Caco-2 (cell line): ENCODE measurements at regions of chr2 and their contacts with region 1.

Region 1: DNA sequence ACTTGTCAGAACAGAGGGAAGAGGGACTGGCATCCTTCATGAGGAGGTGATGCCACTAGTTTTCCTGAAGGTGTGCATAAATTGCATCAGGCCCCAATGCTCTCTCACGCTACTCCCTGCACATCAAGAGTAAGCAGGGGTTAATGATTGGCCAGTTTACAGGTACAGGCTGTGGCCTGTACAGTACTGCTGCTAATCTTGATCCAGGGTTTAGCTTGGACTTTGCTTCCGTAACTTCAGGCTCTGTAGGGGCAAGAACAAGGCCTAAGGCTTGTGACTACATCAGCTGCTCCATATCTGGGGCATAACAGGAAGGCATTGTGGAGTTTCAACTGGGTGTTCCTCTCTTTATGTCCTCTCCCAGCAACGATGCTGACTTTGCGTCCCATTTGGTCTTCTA is 96.8 kb upstream of the FZD7 start:
- DNase-seq: peak; percentile 74 to 83
- H3K4me3 ChIP-seq: no peak overlapping the region
- H3K4me3 Mint-ChIP-seq: no peak overlapping the region
- H3K27ac Mint-ChIP-seq: peak overlapping the region; percentile 85
- H3K4me1 ChIP-seq: peaks cover 30% of the 10 kb centered on the region
- H3K4me1 Mint-ChIP-seq: peaks cover 20% of the 10 kb centered on the region
- H3K27me3 ChIP-seq: no peaks in the 10 kb centered on the region
- H3K27me3 Mint-ChIP-seq: no peaks in the 10 kb centered on the region
- CTCF ChIP-seq: no peak

Region 2: DNA sequence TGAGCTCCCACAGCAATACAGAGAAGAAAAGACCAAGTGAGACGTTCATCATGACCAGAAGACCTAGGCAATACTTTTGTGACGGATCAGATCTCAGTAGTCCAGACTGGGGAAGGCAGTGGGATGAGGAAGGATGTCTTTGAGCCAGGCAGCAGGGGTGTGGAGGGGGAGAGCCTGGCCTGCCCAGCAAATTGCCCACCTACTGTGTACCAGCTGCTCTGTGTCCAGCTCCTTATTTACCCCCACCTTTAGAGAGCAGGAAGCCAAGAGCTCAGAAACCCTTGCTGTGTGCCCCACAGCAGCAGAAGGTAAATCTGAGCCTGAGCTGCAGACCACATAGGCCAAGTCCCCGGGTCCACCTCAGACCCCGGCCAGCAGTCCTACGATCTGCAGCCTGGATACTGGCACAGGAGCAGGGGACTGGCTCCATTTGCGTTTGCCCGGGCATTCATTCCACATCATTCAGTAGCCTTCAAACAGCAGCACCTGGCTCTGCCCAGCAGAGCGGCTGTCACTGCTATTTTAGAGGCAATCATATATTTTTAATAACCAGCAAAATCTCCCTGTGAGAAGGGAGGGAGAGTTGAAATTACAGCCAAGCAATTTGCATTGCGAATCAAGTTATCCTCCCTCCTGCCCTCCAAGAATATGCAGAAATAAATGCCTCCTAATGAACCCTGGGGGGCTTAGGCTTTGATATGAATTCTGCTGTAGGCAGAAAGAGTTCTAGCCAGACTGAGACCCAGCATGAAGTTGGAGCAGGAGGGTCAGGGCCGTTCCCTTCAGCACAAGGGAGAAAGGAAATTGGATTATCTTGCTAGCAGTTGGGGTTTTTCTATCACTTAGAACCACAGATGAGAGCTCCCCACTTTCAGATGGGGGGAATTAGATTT is 13.1 kb before region 1 on chr2:
- CTCF ChIA-PET with region 1: no interaction called
- POLR2A ChIA-PET with region 1: no interaction called
- intact Hi-C with region 1: loop called (anchors 2 kb)
- DNase-seq: no peak
- H3K4me3 ChIP-seq: no peak overlapping the region
- H3K4me3 Mint-ChIP-seq: no peak overlapping the region
- H3K27ac Mint-ChIP-seq: no peak overlapping the region
- H3K4me1 ChIP-seq: peaks cover 15% of the 10 kb centered on the region
- H3K4me1 Mint-ChIP-seq: peaks cover 21% of the 10 kb centered on the region
- H3K27me3 ChIP-seq: no peaks in the 10 kb centered on the region
- H3K27me3 Mint-ChIP-seq: no peaks in the 10 kb centered on the region
- CTCF ChIP-seq: no peak

Region 3: GRCh38 chr2:202249521-202249850 is 312.7 kb after region 1 on chr2:
- CTCF ChIA-PET with region 1: no interaction called
- POLR2A ChIA-PET with region 1: no interaction called
- intact Hi-C with region 1: no loop called
- DNase-seq: no peak
- H3K4me3 ChIP-seq: no peak overlapping the region
- H3K4me3 Mint-ChIP-seq: no peak overlapping the region
- H3K27ac Mint-ChIP-seq: no peak overlapping the region
- H3K4me1 ChIP-seq: no peaks in the 10 kb centered on the region
- H3K4me1 Mint-ChIP-seq: no peaks in the 10 kb centered on the region
- H3K27me3 ChIP-seq: no peaks in the 10 kb centered on the region
- H3K27me3 Mint-ChIP-seq: peaks cover under 1% of the 10 kb centered on the region
- CTCF ChIP-seq: no peak